ENCODE measurements at regions of chr14 and their contacts with region 1.

Region 1: DNA sequence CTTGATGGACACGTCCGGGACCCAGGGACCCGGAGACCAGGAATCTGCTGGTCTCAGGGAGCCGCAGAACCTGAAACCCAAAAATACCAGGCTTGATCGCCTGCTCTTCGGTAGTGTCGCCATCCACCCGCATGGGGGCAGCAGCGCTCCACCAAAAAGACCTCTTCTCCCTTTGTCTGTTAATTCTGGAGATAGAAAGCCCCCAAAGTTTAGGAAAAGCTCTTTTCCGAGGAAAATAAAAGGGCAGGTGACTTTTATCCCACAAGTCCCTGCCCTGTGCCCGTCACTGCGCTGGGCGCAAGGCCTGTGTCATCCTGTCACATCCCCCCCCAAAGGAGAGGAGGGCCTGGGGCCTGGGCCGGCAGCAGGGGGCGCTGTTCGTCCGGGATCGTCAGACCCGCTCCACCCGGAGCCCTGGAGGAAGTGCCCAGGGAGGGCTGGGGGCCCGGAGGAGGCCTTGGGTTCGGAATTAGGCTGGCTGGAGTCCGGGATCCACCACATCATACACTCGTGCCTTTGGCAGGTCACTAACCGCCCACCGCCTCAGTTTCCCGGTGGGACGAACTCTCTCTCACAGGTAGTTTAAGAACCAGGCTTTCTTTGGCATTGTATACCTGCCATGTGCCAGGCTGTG is 31.9 kb downstream of the DAD1 start:
- H3K4me3 ChIP-seq: peak overlapping the region; percentile 39
- H3K27ac ChIP-seq: peak overlapping the region; percentile 28; the same call in 1 of the 2 replicates
- H3K4me1 ChIP-seq: peaks cover 3% of the 10 kb centered on the region; the same call in 1 of the 2 replicates
- CTCF ChIP-seq: peak; percentile 95

Region 2: GRCh38 chr14:22536853-22537338 is 20.2 kb before region 1 on chr14:
- CTCF ChIA-PET with region 1: interaction called, 30 read pairs
- POLR2A ChIA-PET with region 1: interaction called, 3 read pairs
- H3K4me3 ChIP-seq: no peak overlapping the region
- H3K27ac ChIP-seq: peak overlapping the region; percentile 33; the same call in 1 of the 2 replicates
- H3K4me1 ChIP-seq: 0 out of 2 replicates have a peak, but pooled peaks cover 2% of the 10 kb centered on the region
- CTCF ChIP-seq: no peak

Region 3: DNA sequence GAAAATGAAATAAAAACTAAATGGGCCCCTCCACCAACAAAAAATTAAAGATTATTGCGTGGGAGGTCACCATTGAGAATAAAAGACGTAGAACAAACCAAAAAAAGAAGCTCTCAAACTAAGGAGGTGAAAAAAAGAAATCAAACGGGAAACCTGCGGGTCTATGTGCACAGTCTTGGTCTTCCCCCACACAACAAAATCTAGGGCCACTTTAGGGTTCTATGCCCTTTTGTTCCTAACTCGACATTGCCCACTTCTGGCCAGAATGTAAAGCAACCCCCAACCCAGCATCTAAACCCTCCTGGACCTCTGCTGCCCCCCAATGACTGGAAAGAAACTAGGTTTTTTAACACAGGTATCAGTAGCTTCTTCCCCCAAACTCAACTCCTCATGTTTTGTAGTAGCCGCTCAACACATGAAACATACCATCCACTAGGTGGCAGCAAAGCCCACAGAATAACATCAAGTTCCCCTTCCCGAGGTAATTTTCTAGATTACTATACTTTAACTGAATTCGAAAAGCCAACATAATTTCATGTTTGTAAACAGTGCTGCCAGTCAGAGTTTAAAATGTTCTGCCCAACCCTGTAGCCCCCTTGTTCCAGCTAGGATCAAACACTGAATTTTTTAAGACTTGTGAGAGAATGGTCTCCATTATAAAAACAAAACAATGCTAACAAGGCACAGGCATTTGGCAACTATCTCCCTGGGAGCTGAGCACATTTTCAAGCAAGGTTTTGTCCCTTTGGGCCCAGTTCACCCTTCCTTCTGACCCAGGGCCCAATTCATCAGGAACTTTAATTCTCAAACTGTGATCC is 13.2 kb after region 1 on chr14:
- CTCF ChIA-PET with region 1: interaction called, 50 read pairs
- POLR2A ChIA-PET with region 1: no interaction called
- H3K4me3 ChIP-seq: no peak overlapping the region
- H3K27ac ChIP-seq: no peak overlapping the region
- H3K4me1 ChIP-seq: peaks cover 2% of the 10 kb centered on the region; the same call in 1 of the 2 replicates
- CTCF ChIP-seq: peak; percentile 83

Region 4: DNA sequence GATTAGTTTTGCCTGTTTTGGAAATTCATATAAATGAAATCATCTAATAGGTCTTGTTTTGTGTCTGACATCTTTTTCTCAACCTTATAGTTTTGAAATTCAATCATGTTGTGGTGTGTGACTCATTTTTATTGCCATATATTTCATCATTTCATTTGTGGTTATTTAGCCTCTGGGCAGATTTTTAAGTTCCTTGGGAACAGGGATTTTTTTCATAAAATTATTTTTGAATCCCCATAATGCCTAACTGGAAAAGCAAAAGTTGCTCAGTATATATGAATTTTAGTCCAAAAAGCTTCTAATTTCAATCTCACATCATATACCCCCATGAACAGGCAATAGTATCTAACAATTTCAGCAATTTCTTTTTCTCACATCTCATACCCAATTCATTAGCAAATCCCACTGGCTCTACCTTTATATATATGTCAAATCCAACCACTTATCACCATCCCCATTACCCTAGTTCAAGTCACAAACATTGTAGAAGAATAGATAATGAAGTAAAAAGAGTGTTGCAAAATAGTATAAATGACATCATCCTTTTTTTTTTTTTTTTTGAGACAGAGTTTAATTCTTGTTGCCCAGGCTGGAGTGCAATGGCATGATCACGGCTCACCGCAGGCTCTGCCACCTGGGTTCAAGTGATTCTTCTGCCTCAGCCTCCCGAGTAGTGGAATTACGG is 89.6 kb after region 1 on chr14:
- CTCF ChIA-PET with region 1: interaction called, 12 read pairs
- POLR2A ChIA-PET with region 1: no interaction called
- H3K4me3 ChIP-seq: no peak overlapping the region
- H3K27ac ChIP-seq: no peak overlapping the region
- H3K4me1 ChIP-seq: no peaks in the 10 kb centered on the region; the same call in 1 of the 2 replicates
- CTCF ChIP-seq: no peak

Region 5: GRCh38 chr14:22658946-22659345 is 101.8 kb after region 1 on chr14:
- CTCF ChIA-PET with region 1: interaction called, 27 read pairs
- POLR2A ChIA-PET with region 1: no interaction called
- H3K4me3 ChIP-seq: no peak overlapping the region
- H3K27ac ChIP-seq: no peak overlapping the region
- H3K4me1 ChIP-seq: peaks cover 9% of the 10 kb centered on the region
- CTCF ChIP-seq: no peak

Region 6: DNA sequence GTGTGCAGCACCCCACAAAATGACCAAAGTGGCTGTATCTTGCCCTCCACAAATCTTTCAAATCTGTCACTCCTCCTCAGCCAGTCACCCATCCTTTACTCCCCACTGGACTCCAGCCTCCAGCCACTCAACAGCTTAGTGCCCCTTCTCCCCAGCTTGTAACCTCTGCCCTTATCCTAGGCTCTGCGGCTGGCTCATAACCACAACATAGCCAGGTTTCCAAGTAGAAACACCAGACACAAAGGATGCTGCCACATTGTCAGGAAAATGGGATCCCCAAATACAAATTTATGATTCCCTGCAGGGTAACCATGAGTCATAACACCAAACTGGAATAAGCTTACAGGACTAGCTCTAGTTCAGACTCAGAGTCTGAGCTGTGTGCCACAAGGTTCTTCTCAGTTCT is 224.5 kb after region 1 on chr14:
- CTCF ChIA-PET with region 1: interaction called, 11 read pairs
- POLR2A ChIA-PET with region 1: no interaction called
- H3K4me3 ChIP-seq: no peak overlapping the region
- H3K27ac ChIP-seq: no peak overlapping the region
- H3K4me1 ChIP-seq: no peaks in the 10 kb centered on the region
- CTCF ChIP-seq: no peak

Region 7: DNA sequence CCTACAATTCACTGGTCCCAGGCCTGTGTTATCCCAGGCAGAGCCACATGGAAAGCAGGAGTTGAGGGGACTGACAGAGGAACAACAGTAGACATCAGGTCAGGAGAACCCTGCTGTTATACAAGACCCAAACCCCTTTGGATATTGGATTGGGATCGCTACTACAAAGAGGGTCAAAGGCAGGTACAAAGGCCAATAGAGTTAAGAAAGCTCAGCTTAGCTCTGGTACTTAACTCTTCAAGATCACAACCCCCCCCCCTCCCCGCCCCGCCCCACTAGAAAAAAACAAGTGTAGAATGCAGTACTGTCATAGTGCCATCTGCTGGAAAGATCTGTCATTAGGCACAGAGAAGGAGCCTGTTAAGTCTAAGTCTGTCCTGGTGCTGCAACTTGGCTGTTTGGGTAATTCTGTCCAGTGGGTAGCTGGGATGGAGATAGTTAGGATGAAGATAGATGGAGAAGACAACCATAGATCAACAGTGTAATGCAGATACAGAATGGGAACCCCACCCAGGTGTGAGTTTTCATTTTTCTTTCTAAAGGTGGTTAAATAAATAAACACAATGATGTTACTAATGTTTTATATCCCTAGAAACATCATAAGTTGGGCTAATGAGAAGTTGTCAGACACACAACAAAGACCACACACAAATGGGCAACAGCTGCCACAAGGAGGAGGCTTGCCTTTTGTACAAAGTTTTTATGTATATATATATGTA is 343.1 kb after region 1 on chr14:
- CTCF ChIA-PET with region 1: interaction called, 16 read pairs
- POLR2A ChIA-PET with region 1: no interaction called
- H3K4me3 ChIP-seq: no peak overlapping the region
- H3K27ac ChIP-seq: no peak overlapping the region
- H3K4me1 ChIP-seq: no peaks in the 10 kb centered on the region
- CTCF ChIP-seq: peak; percentile 45; the same call in 1 of the 2 replicates

Measured in HEK293 (cell line).